ENCODE measurements at regions of chr5 and their contacts with region 1.

Region 1: GRCh38 chr5:64784451-64785025 is 15.8 kb downstream of the CWC27 start:
- DNase-seq: peak; percentile 85
- ATAC-seq: peak; percentile 77
- H3K4me3 Mint-ChIP-seq: no peak overlapping the region
- H3K27ac Mint-ChIP-seq: no peak overlapping the region
- H3K4me1 Mint-ChIP-seq: peaks cover 6% of the 10 kb centered on the region
- H3K27me3 Mint-ChIP-seq: no peaks in the 10 kb centered on the region

Region 2: DNA sequence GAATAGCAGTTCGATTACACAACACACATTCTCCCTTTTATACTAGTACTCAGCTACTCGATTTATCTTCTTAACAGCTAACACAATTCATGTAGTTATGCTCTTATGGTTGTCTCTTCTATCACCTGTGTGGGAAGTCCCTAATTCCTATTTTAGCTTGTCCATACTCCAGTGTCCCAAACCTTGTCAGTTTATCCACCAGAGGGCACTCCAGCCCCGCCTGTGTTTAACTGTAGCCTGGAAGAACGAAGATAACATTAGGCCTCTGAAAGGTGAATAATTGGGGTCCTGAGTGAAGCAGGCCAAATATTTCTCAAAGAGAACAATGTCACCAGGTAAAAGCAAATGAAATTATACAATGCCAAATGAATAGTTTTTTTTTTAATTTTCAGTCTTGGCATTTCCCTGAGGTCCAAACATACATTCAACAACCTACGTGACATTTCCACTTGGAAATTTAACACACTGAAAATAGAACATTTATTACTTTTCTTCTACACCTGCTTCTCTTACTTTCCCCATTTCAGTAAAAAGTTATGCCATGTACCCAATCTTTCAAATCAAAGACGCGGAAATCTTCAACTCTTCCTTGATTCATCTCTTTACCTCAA is 1383.0 kb before region 1 on chr5:
- CTCF ChIA-PET with region 1: no interaction called
- POLR2A ChIA-PET with region 1: no interaction called
- intact Hi-C with region 1: loop called in 1 of 2 experiments (anchors 10 kb)
- DNase-seq: peak; percentile 66
- ATAC-seq: no peak
- H3K4me3 Mint-ChIP-seq: no peak overlapping the region
- H3K27ac Mint-ChIP-seq: no peak overlapping the region
- H3K4me1 Mint-ChIP-seq: no peaks in the 10 kb centered on the region
- H3K27me3 Mint-ChIP-seq: no peaks in the 10 kb centered on the region

Region 3: GRCh38 chr5:64074533-64074932 is 710.0 kb before region 1 on chr5:
- CTCF ChIA-PET with region 1: no interaction called
- POLR2A ChIA-PET with region 1: no interaction called
- intact Hi-C with region 1: loop called in 1 of 2 experiments (anchors 10 kb)
- DNase-seq: no peak
- ATAC-seq: no peak
- H3K4me3 Mint-ChIP-seq: no peak overlapping the region
- H3K27ac Mint-ChIP-seq: no peak overlapping the region
- H3K4me1 Mint-ChIP-seq: no peaks in the 10 kb centered on the region
- H3K27me3 Mint-ChIP-seq: no peaks in the 10 kb centered on the region

Region 4: GRCh38 chr5:64229163-64229774 is 555.3 kb before region 1 on chr5:
- CTCF ChIA-PET with region 1: interaction called, 3 read pairs
- POLR2A ChIA-PET with region 1: no interaction called
- intact Hi-C with region 1: loop called in 1 of 2 experiments (anchors 1 kb)
- DNase-seq: no peak
- ATAC-seq: no peak
- H3K4me3 Mint-ChIP-seq: no peak overlapping the region
- H3K27ac Mint-ChIP-seq: no peak overlapping the region
- H3K4me1 Mint-ChIP-seq: no peaks in the 10 kb centered on the region
- H3K27me3 Mint-ChIP-seq: no peaks in the 10 kb centered on the region

Region 5: GRCh38 chr5:64634997-64635686 is 149.4 kb before region 1 on chr5:
- CTCF ChIA-PET with region 1: interaction called, 67 read pairs
- POLR2A ChIA-PET with region 1: no interaction called
- intact Hi-C with region 1: loop called (anchors 1 kb)
- DNase-seq: no peak
- ATAC-seq: peak; percentile 23
- H3K4me3 Mint-ChIP-seq: no peak overlapping the region
- H3K27ac Mint-ChIP-seq: no peak overlapping the region
- H3K4me1 Mint-ChIP-seq: peaks cover 4% of the 10 kb centered on the region
- H3K27me3 Mint-ChIP-seq: peaks cover 28% of the 10 kb centered on the region

Region 6: GRCh38 chr5:64768358-64769312 is 15.9 kb before region 1 on chr5 and contains the starts of genes CWC27 and SREK1IP1:
- CTCF ChIA-PET with region 1: interaction called, 10 read pairs
- POLR2A ChIA-PET with region 1: no interaction called
- intact Hi-C with region 1: no loop called
- DNase-seq: peak; percentile 89
- ATAC-seq: peak; percentile 97
- H3K4me3 Mint-ChIP-seq: peak within 1 kb of the TSS; percentile 91
- H3K27ac Mint-ChIP-seq: peak within 1 kb of the TSS; percentile 95
- H3K4me1 Mint-ChIP-seq: peaks cover 45% of the 10 kb centered on the region
- H3K27me3 Mint-ChIP-seq: no peaks in the 10 kb centered on the region
- total RNA-seq, gene CWC27: 35.4 to 35.8 TPM
- total RNA-seq, gene SREK1IP1: 27.8 TPM